Mammary epithelial cell (primary cell): ENCODE measurements at regions of chr12 and their contacts with region 1.

Region 1: GRCh38 chr12:2583091-2583497 is 211.7 kb upstream of the FKBP4 start:
- DNase-seq: peak; percentile 25
- H3K4me3 ChIP-seq: no peak overlapping the region
- H3K27ac ChIP-seq: no peak overlapping the region
- H3K4me1 ChIP-seq: peaks cover 5% of the 10 kb centered on the region
- H3K27me3 ChIP-seq: peaks cover 5% of the 10 kb centered on the region
- CTCF ChIP-seq: peak; percentile 61 to 73

Region 2: DNA sequence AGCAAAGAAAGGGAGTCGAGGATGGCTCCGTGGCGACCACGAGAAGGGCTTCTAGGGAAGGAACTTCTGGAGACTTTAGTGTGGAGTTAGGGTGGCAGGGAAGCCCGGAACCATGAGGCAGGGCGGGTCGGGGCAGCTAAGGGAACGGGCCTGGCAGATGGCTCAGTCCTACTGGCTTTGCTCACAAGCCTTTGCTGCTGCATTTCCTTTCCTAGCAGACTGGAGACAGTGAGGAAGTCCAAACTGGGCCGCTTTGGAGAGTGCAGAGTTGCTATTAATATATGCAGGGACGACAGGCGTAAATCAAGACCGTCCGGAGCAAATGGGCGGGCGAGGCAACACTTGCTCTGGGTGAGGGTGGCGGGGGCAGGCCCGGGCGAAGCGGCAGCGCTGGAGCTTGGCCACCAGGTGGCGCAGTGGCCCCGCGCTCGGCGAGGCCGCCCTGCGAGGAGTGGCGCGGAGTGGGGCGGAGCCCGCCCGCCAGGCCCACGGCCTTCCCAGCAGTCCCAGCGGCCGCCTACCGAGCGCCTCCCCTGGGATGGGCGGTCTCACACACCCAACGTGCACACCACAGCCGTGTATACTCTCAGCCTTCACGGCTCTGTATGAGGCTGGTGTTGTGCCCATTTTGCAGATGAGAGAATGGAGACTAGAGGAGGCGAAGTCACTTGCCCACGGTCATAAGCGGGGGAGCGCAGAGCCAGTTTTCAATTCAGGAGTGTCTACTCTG is 787.1 kb before region 1 on chr12:
- CTCF ChIA-PET with region 1: no interaction called
- dilution Hi-C with region 1: no loop called
- in situ Hi-C with region 1: no loop called
- intact Hi-C with region 1: loop called (anchors 1 kb)
- DNase-seq: peak; percentile 77
- H3K4me3 ChIP-seq: peak overlapping the region; percentile 9 to 39 (median 36)
- H3K27ac ChIP-seq: no peak overlapping the region
- H3K4me1 ChIP-seq: peaks cover 14% of the 10 kb centered on the region
- H3K27me3 ChIP-seq: no peaks in the 10 kb centered on the region
- CTCF ChIP-seq: peak; percentile 64 to 78

Region 3: DNA sequence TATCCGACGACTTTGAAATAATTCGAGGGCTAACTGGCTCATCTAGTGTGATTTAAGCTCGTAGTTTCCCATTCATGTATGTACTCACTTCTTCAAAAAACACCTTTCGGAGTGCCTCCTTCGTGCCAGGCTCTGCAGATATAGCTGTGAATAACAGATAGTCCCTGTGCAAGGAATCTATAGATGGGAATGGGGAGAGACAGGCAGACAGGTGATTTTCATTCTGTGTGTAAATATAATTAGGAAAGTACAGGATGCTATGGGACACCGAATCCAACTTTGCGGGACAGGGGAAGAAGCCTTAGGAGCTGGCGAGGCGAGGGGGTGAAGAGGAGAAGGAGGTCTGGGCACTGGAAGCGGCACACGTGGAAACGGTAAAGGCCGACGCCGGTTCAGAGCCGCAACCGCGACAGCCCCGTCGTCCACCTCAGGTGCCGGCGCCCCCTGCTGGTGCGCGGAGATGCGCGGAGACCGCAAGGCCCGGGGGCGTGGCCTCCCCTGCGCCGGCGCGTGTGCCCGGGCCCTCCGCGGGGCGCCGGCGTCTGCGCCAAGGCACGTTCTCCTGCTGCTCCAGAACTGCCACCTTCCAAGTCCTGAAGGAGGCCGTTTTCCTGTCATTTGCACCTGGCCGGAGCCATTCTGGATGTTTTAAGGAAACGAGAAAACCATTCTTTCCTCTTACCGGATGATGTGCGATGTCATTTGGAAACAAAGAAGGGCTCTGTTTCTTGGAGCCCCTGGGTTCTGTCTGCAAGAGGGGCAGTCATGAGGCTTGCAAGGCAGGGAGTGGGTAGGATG is 548.3 kb before region 1 on chr12:
- CTCF ChIA-PET with region 1: no interaction called
- dilution Hi-C with region 1: no loop called
- in situ Hi-C with region 1: no loop called
- intact Hi-C with region 1: loop called (anchors 5 kb)
- DNase-seq: peak; percentile 68
- H3K4me3 ChIP-seq: peak overlapping the region; percentile 9 to 19 (median 16)
- H3K27ac ChIP-seq: no peak overlapping the region
- H3K4me1 ChIP-seq: peaks cover 8% of the 10 kb centered on the region
- H3K27me3 ChIP-seq: peaks cover 5% of the 10 kb centered on the region
- CTCF ChIP-seq: peak; percentile 69 to 85

Region 4: DNA sequence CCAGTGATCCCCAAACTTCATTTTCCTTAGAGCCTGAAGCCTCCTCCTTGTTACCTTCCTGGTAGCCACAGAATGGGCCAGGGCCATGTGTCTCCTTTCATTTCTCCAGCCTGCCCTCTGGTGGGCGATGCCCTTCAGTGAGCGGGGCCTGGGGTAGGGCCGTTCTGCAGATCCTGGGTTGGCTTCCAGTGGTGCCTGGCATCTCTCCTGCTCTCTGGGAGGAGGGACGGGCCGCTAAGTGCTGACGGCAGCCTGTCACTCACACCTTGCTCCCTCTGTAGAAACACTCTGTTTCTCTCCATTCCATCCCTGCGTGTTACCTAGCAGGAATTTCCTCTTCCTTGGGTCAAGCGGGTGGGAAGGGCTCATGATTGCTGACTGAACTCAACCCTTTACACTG is 298.2 kb before region 1 on chr12:
- CTCF ChIA-PET with region 1: no interaction called
- dilution Hi-C with region 1: no loop called
- in situ Hi-C with region 1: no loop called
- intact Hi-C with region 1: loop called (anchors 1 kb)
- DNase-seq: peak; percentile 58
- H3K4me3 ChIP-seq: no peak overlapping the region
- H3K27ac ChIP-seq: no peak overlapping the region
- H3K4me1 ChIP-seq: peaks cover 9% of the 10 kb centered on the region
- H3K27me3 ChIP-seq: peaks cover 2% of the 10 kb centered on the region
- CTCF ChIP-seq: peak; percentile 75 to 81

Region 5: GRCh38 chr12:2360629-2361168 is 222.4 kb before region 1 on chr12:
- CTCF ChIA-PET with region 1: interaction called, 3 read pairs
- dilution Hi-C with region 1: no loop called
- in situ Hi-C with region 1: no loop called
- intact Hi-C with region 1: loop called (anchors 2 kb)
- DNase-seq: no peak
- H3K4me3 ChIP-seq: no peak overlapping the region
- H3K27ac ChIP-seq: no peak overlapping the region
- H3K4me1 ChIP-seq: peaks cover 36% of the 10 kb centered on the region
- H3K27me3 ChIP-seq: no peaks in the 10 kb centered on the region
- CTCF ChIP-seq: peak; percentile 24 to 32

Region 6: DNA sequence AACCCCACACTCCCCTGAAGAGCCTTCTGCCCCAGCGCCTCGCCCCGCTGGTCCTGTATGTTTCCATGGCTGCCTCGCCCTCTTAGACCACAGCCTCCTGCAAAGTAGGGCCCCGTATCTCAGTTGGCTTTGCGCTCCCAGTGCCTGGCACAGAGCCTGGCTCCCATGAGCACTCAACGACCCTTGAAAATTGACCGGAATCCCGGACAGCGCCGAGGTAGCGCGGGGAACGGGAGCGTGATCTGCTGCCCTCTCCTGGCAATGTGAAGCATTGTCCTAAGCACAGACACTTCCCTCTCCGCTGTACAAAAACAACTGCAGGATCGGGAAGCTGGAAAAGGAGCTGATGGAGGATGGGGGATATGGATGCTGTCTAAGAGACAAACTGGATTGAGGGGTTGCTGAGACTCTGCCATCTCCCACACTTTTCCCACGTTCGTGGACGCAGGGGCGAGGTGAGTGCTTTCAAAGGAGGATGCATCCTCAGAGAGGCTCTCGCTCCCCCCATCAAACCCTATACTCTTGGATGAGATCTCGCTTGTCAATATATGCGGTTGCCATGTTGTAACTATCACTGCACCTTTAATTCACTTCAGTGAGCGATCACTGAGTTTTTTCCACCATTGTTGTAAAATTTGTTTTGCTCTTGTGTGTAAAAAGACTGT is 201.0 kb after region 1 on chr12:
- CTCF ChIA-PET with region 1: no interaction called
- dilution Hi-C with region 1: no loop called
- in situ Hi-C with region 1: no loop called
- intact Hi-C with region 1: loop called (anchors 5 kb)
- DNase-seq: peak; percentile 18
- H3K4me3 ChIP-seq: peak overlapping the region in 1 of 3 experiments; percentile 25
- H3K27ac ChIP-seq: no peak overlapping the region
- H3K4me1 ChIP-seq: no peaks in the 10 kb centered on the region
- H3K27me3 ChIP-seq: no peaks in the 10 kb centered on the region
- CTCF ChIP-seq: peak; percentile 88 to 94